HEK293 (cell line): ENCODE measurements at regions of chr6 and their contacts with region 1.

Region 1: GRCh38 chr6:117317261-117317660 is 51.9 kb downstream of the VGLL2 start:
- H3K4me3 ChIP-seq: no peak overlapping the region
- H3K27ac ChIP-seq: no peak overlapping the region
- H3K4me1 ChIP-seq: no peaks in the 10 kb centered on the region
- CTCF ChIP-seq: 0 out of 2 replicates have a peak, but pooled peaks have one; percentile 41

Region 2: DNA sequence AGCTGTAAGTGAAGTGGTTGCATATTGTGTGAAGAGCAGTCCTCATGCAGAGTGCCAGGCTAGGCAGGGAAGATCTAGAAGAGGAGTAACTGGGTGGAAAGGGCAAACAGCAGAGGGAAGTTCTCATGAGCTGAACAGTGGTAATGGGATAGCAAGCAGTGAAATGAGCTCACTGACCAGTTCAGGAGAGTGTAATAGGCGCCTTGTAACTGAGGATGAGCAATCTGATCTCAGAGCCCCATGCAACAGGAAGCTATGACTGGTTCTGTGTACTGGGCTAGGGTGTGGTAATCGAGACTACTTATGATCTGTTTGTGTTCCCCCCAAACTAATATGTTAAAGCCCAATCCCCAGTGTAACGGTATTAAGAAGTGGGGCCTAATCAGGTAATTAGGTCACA is 341.7 kb before region 1 on chr6:
- CTCF ChIA-PET with region 1: interaction called, 93 read pairs
- POLR2A ChIA-PET with region 1: no interaction called
- H3K4me3 ChIP-seq: no peak overlapping the region
- H3K27ac ChIP-seq: no peak overlapping the region
- H3K4me1 ChIP-seq: no peaks in the 10 kb centered on the region
- CTCF ChIP-seq: no peak

Region 3: DNA sequence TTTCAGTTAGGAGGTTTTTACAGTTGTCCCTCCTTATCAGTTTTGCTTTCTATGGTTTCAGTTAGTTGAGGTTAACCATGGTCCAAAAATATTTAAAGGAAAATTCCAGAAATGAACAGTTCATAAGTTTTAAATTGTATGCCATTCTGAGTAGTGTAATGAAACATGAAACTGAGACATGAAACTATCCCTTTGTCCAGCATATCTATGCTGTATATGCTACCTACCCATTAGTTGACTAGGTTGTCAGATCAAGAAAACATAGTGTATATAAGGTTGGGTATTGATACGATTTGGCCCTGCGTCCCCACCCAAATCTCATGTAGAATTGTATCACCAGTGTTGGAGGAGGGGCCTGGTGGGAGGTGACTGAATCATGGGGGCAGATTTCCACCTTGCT is 12.8 kb before region 1 on chr6:
- CTCF ChIA-PET with region 1: interaction called, 11 read pairs
- POLR2A ChIA-PET with region 1: no interaction called
- H3K4me3 ChIP-seq: no peak overlapping the region
- H3K27ac ChIP-seq: no peak overlapping the region
- H3K4me1 ChIP-seq: no peaks in the 10 kb centered on the region
- CTCF ChIP-seq: no peak

Region 4: GRCh38 chr6:117359581-117359980 is 42.3 kb after region 1 on chr6:
- CTCF ChIA-PET with region 1: no interaction called
- POLR2A ChIA-PET with region 1: no interaction called
- H3K4me3 ChIP-seq: no peak overlapping the region
- H3K27ac ChIP-seq: no peak overlapping the region
- H3K4me1 ChIP-seq: no peaks in the 10 kb centered on the region
- CTCF ChIP-seq: no peak

Region 5: GRCh38 chr6:117613920-117614560 is 296.8 kb after region 1 on chr6:
- CTCF ChIA-PET with region 1: no interaction called
- POLR2A ChIA-PET with region 1: no interaction called
- H3K4me3 ChIP-seq: no peak overlapping the region
- H3K27ac ChIP-seq: no peak overlapping the region
- H3K4me1 ChIP-seq: no peaks in the 10 kb centered on the region
- CTCF ChIP-seq: no peak